Activated CD4-positive, alpha-beta memory T cell treated with anti-CD3 and anti-CD28 coated beads for 36 hours (primary cell): ENCODE measurements at regions of chr9 and their contacts with region 1.

Region 1: DNA sequence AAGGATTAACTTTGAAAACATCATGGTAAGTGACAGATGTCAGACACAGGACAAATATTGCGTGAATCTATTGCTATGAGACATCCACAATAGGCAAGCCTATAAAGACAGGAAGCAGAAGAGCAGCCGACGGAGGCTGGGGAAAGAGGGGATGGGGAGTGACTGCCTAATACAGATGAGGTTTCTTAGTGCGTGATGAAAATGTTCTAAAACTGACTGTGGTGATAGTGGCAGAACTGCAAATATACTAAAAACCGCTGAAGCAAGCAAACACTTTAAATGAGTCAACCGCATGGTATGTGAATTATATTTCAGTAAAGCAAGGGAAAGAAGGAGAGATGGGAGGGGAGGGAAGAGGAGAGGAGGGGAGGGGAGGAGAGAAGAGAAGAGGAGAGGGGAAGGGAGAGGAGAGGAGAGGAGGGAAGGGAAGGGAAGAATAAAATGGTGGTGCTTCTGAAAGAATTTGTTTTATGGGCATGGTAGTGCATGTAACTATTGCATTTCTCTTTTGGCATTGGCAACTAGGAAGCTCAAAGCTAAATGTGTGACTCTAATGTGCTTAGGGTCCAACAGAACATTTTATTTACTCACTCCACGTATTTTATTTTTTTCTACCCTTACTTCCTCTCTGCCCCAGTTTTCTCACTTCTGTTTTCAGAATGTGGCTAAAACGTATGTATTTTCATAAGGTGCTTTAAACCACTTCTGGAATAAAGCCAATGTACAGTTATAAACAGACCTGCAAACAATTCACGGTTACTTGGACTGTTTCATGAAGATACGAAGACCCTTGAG is 21.3 kb downstream of the AKNA start:
- DNase-seq: peak; percentile 75
- H3K4me3 Mint-ChIP-seq: peak overlapping the region; percentile 33
- H3K27ac Mint-ChIP-seq: peak overlapping the region; percentile 87
- H3K4me1 Mint-ChIP-seq: peaks cover 81% of the 10 kb centered on the region
- H3K27me3 Mint-ChIP-seq: no peaks in the 10 kb centered on the region

Region 2: GRCh38 chr9:114339130-114339908 is 27.2 kb before region 1 on chr9:
- CTCF ChIA-PET with region 1: interaction called, 13 read pairs
- POLR2A ChIA-PET with region 1: no interaction called
- intact Hi-C with region 1: no loop called
- DNase-seq: peak; percentile 71
- H3K4me3 Mint-ChIP-seq: no peak overlapping the region
- H3K27ac Mint-ChIP-seq: peak overlapping the region; percentile 64
- H3K4me1 Mint-ChIP-seq: peaks cover 3% of the 10 kb centered on the region
- H3K27me3 Mint-ChIP-seq: no peaks in the 10 kb centered on the region

Region 3: GRCh38 chr9:114348906-114349482 is 17.5 kb before region 1 on chr9:
- CTCF ChIA-PET with region 1: interaction called, 3 read pairs
- POLR2A ChIA-PET with region 1: interaction called, 4 read pairs
- intact Hi-C with region 1: loop called (anchors 1 kb)
- DNase-seq: peak; percentile 97
- H3K4me3 Mint-ChIP-seq: peak overlapping the region; percentile 40
- H3K27ac Mint-ChIP-seq: peak overlapping the region; percentile 100
- H3K4me1 Mint-ChIP-seq: peaks cover 46% of the 10 kb centered on the region
- H3K27me3 Mint-ChIP-seq: no peaks in the 10 kb centered on the region